Right ventricle myocardium superior (tissue), 1 donor: ENCODE measurements at regions of chr17 and their contacts with region 1.

Region 1: DNA sequence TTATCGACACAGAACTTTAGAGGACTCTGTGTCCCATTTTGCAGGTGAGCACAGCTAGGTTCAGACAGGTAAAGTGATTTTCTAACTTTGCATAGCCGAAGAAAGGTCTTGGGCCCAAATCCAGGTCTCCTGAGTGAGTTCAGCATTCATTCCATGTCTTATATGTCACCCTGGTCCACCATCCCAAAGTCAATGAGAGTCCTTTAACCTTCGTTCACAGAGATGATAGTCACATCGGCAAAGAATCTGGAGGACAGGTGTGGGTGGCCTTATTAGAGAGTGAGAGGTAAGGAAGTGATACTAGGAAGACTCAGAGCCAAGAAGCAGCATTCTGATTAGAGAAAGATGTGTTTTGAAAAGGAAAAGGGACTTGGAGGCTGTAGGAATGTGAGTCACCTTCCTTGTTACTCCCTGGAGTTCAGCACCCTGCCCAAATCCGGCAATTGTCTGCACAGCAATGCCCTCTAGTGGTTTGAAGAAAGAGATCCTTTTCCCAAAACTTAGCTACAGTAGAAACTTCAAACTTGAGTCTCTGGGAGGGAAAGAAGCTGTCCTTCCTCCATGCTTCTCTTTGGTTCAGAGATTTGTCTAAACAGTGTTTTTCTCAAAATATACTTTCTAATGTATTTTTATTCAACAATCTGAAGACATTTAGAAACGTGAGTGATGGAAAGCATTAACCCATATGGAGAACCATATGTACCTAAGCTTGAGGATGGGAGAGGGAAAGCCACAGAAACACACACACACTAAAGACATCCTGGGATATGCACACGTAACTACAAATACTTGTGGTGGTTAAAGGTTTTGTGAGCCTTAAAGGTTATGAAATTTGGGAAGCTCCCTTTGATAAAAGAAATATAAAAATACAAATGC is 96.4 kb upstream of the SHISA6 start:
- DNase-seq: no peak
- ATAC-seq: no peak

Region 2: GRCh38 chr17:10875979-10876555 is 268.5 kb before region 1 on chr17:
- intact Hi-C with region 1: loop called (anchors 5 kb)
- DNase-seq: peak; percentile 45
- ATAC-seq: no peak